OCI-LY7 (cell line): ENCODE measurements at regions of chr21 and their contacts with region 1.

Region 1: DNA sequence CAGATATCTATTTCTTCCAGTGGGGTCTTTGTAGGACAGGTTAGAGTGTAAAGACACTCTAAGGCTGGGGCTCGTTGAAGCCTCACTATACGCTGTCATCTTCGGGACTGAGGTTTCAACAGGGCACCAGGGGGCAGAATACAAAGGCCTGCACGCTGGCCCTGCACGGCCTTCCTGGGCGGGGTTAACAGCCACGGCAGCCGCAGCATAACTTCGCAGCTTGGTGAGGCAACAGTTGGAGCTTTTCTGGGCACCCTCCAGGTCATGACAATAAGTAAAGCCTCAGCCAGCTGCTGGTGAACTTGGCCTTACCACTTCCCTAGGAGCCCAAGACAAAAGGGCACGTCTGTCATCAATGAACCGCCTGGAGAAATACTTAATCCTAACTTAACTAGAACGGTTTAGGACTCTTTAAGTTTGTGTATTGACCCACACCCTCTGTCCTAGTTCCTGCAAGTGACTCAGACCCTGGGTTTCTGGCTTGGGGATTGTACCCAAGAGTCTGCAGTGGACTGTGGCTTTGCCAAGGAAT is 2.3 kb upstream of the RUNX1 start:
- DNase-seq: peak; percentile 92
- H3K4me3 ChIP-seq: peak overlapping the region; percentile 73
- H3K27ac ChIP-seq: peak overlapping the region; percentile 87
- H3K4me1 ChIP-seq: peaks cover 33% of the 10 kb centered on the region
- CTCF ChIP-seq: peak; percentile 87

Region 2: GRCh38 chr21:34888569-34889319 is 162.6 kb before region 1 on chr21:
- CTCF ChIA-PET with region 1: interaction called, 6 read pairs
- POLR2A ChIA-PET with region 1: interaction called, 13 read pairs
- intact Hi-C with region 1: loop called (anchors 1 kb)
- DNase-seq: peak; percentile 72
- H3K4me3 ChIP-seq: peak overlapping the region; percentile 81
- H3K27ac ChIP-seq: peak overlapping the region; percentile 46
- H3K4me1 ChIP-seq: peaks cover 23% of the 10 kb centered on the region
- CTCF ChIP-seq: no peak

Region 3: GRCh38 chr21:35026617-35027562 is 24.5 kb before region 1 on chr21:
- CTCF ChIA-PET with region 1: no interaction called
- POLR2A ChIA-PET with region 1: interaction called, 6 read pairs
- intact Hi-C with region 1: loop called (anchors 1 kb)
- DNase-seq: peak; percentile 93
- H3K4me3 ChIP-seq: peak overlapping the region; percentile 65
- H3K27ac ChIP-seq: peak overlapping the region; percentile 97
- H3K4me1 ChIP-seq: peaks cover 69% of the 10 kb centered on the region
- CTCF ChIP-seq: peak; percentile 21; the same call in 1 of the 2 replicates

Region 4: DNA sequence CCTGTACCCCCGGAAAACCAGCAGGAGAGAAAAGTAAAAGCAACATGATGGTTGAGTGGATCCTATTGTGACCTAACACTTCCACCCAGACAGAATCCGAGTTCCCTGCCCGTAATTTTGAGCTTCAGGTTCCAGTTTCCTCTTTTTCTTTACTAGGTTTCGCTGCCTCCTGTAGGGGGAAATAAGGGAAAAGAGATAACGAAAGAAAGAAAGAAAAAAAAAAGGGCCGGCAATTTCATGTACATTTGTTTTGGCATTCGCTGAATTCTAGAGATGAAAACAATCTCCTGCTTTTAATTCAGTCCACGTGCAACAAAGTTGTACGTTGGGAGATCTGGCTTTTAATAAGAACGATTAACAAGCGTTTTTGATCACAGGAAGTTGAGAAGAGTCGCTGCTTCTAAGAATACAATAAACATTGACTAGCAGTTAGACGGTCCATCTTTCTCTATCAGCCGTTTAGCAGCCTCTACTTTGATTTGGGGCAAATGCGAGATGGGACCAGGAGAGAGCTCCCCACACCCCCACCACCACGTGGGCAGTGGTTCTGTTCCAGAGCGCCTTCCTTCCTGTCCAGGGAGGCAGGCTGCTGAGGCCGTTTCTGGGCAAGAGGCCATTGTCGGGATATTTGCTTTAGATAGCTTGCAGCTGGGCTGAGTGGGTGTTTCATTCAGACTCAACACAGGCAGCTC is 153.6 kb after region 1 on chr21:
- CTCF ChIA-PET with region 1: no interaction called
- POLR2A ChIA-PET with region 1: interaction called, 6 read pairs
- intact Hi-C with region 1: loop called (anchors 5 kb)
- DNase-seq: peak; percentile 54
- H3K4me3 ChIP-seq: peak overlapping the region; percentile 36
- H3K27ac ChIP-seq: peak overlapping the region; percentile 76
- H3K4me1 ChIP-seq: peaks cover 37% of the 10 kb centered on the region
- CTCF ChIP-seq: peak; percentile 57

Region 5: GRCh38 chr21:35303085-35303484 is 251.7 kb after region 1 on chr21:
- CTCF ChIA-PET with region 1: no interaction called
- POLR2A ChIA-PET with region 1: no interaction called
- intact Hi-C with region 1: no loop called
- DNase-seq: no peak
- H3K4me3 ChIP-seq: no peak overlapping the region
- H3K27ac ChIP-seq: no peak overlapping the region
- H3K4me1 ChIP-seq: peaks cover 5% of the 10 kb centered on the region
- CTCF ChIP-seq: no peak

Region 6: GRCh38 chr21:35352066-35352770 is 300.9 kb after region 1 on chr21:
- CTCF ChIA-PET with region 1: no interaction called
- POLR2A ChIA-PET with region 1: no interaction called
- intact Hi-C with region 1: no loop called
- DNase-seq: no peak
- H3K4me3 ChIP-seq: no peak overlapping the region
- H3K27ac ChIP-seq: no peak overlapping the region
- H3K4me1 ChIP-seq: no peaks in the 10 kb centered on the region
- CTCF ChIP-seq: no peak

Region 7: DNA sequence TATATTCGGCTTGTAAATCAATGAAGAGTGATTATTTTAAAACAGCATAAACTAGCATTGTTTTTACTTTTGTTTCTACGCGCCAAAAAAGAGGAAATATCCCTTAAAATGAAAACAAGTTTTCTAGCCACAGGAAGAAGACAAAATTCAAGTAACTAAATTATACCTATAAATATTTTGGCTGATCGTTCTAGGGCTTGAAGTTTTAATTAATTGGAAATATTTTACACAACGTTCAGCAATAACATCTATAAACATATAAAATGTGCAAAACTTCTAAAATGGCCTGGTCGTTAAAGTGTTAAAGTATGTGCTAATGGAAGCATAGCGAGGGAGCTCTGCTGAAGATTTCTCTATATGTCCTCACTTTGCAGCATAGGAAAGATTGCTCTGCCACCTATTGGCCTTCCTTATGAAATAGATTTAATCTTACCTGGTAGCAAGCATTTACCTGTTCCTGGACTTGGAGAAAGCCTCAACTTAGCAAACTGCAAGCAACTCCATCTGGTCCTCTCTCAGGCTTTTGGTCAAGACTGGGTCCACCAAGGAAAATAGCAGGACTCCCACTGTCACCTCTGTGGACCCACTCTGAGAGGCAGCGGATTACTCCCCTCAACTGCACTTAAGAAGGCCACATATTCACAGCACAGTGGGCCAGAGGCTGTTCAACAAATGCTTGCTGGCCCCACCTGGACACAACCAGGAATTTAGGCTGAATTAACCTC is 349.0 kb after region 1 on chr21:
- CTCF ChIA-PET with region 1: interaction called, 3 read pairs
- POLR2A ChIA-PET with region 1: no interaction called
- intact Hi-C with region 1: loop called (anchors 1 kb)
- DNase-seq: peak; percentile 86
- H3K4me3 ChIP-seq: peak overlapping the region; percentile 52
- H3K27ac ChIP-seq: no peak overlapping the region
- H3K4me1 ChIP-seq: peaks cover 20% of the 10 kb centered on the region
- CTCF ChIP-seq: peak; percentile 95